ENCODE measurements at regions of chr15 and their contacts with region 1.

Region 1: GRCh38 chr15:88467073-88467934 is at the starts of genes MRPL46 and MRPS11:
- DNase-seq: peak; percentile 93
- H3K4me3 Mint-ChIP-seq: peak within 1 kb of the TSS; percentile 91
- H3K27ac Mint-ChIP-seq: peak within 1 kb of the TSS; percentile 98
- H3K4me1 Mint-ChIP-seq: peaks cover 32% of the 10 kb centered on the region
- H3K27me3 Mint-ChIP-seq: no peaks in the 10 kb centered on the region
- total RNA-seq, gene MRPL46: 29.1 to 29.2 TPM
- total RNA-seq, gene MRPS11: 50.3 to 57.1 TPM

Region 2: GRCh38 chr15:88218550-88219221 is 248.6 kb before region 1 on chr15:
- CTCF ChIA-PET with region 1: no interaction called
- intact Hi-C with region 1: no loop called
- DNase-seq: no peak
- H3K4me3 Mint-ChIP-seq: no peak overlapping the region
- H3K27ac Mint-ChIP-seq: no peak overlapping the region
- H3K4me1 Mint-ChIP-seq: no peaks in the 10 kb centered on the region
- H3K27me3 Mint-ChIP-seq: no peaks in the 10 kb centered on the region

Region 3: DNA sequence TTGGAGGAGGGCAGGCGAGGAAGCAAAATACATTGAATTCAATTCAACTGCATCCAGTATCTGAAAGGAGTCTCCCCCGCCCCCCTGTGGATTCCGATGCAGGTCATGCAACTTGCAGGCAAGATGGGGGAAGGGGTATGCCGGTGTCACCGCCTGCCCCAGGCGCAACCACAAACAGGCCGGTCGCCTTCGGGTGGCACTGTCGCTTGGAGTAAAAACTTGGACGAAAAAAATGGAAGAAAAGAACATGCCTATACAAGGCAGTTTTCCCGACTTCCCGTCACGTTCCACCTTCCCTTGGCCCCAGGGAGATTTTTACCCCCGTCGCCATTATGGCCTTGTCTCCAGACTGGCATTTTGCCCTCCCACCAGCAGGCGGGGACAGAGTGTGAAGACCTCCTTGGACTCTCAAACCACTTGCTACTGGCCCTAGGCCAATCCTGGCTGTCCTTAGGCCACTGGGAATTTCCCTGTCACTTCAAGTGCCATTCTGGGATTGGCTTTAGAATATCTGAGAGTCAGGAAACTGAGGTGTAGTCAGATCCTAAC is 209.1 kb before region 1 on chr15:
- CTCF ChIA-PET with region 1: no interaction called
- intact Hi-C with region 1: loop called (anchors 5 kb)
- DNase-seq: peak; percentile 57
- H3K4me3 Mint-ChIP-seq: peak overlapping the region; percentile 84
- H3K27ac Mint-ChIP-seq: peak overlapping the region; percentile 19
- H3K4me1 Mint-ChIP-seq: peaks cover 27% of the 10 kb centered on the region
- H3K27me3 Mint-ChIP-seq: peaks cover 61% of the 10 kb centered on the region

Region 4: GRCh38 chr15:88513195-88513594 is 45.9 kb after region 1 on chr15:
- CTCF ChIA-PET with region 1: no interaction called
- intact Hi-C with region 1: no loop called
- DNase-seq: no peak
- H3K4me3 Mint-ChIP-seq: no peak overlapping the region
- H3K27ac Mint-ChIP-seq: no peak overlapping the region
- H3K4me1 Mint-ChIP-seq: no peaks in the 10 kb centered on the region
- H3K27me3 Mint-ChIP-seq: no peaks in the 10 kb centered on the region

Region 5: DNA sequence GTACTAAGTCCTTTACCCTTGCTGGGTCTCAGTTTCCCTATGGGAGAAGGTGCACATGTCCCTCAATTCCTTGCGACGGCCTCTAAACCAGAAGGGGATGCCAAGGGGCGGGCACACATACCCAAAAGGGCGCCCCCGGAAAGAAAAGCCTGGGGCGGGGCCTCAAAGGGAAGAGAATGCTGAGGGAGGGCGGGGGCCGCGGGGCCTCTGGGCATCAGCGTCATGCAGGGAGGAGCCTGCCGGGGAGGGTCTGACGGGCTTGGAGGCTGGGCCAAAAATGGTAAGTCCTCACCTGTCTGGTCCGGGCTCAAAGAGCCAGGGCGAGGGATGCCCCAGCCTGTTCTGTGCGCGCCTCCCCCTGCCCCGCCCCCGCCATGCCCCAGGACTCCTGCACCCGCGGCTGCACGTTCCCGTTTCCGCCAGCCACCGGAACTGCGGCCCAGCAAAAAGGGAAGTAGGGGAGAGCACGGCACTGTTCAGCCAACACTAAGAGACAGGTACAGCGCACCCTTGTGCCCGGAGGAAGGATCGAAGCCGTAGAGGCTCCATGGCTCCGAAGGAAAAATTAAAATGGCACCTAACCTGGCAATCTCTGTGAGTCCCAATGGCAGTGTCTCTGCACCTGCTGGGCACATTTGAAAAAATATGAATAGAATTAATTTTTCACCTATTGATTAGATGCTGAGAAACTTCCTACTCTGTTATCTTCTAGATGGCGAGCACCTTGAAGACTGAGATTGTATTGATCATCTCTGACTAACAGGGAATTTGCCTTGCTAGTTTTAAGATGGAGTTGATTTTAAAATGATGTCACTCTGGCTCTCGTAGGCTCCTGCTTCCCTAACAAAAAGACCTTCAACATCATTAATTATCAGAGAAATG is 79.2 kb after region 1 on chr15 and contains the start of gene DET1:
- CTCF ChIA-PET with region 1: no interaction called
- intact Hi-C with region 1: loop called (anchors 1 kb)
- DNase-seq: peak; percentile 98
- H3K4me3 Mint-ChIP-seq: peak within 1 kb of the TSS; percentile 90
- H3K27ac Mint-ChIP-seq: peak within 1 kb of the TSS; percentile 90
- H3K4me1 Mint-ChIP-seq: peaks cover 15% of the 10 kb centered on the region
- H3K27me3 Mint-ChIP-seq: no peaks in the 10 kb centered on the region
- total RNA-seq, gene DET1: 2.0 to 2.9 TPM

Region 6: DNA sequence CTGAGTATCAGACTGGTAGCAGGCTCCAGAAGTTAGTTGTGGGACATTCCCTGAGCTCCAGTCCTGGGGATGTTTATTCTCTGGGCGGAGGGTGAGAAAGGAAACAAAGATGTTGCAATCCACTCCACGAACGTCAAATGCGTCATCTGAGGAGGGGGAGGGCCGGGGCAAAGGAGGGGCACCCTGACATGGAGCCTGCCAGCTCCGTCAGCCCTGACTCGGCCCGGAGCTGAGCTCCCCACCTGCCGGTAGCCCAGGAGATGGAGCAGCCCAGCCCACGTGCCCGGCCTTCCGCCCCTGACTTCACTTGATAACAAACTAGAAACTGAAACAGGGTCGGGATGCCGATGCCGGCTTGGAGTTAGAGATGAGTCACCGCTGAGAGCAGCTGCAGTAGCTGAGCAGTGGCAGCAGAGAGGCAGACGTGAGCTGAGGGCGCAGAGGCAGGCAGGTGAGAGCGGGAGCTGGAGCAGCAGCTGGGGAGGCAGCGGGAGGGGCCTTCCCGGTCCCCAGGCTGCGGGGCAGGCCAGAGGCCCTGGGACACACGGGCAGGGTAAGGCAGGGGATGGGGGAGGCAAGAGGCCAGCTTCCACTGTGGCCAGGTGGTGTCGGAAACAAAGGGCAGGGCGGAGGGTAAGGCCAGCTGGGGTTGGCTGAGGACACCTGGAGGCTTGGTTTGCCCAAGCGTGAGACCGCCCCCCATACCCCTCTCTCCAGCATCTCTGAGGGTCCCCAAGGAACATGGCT is 171.5 kb after region 1 on chr15 and contains the start of gene ISG20:
- CTCF ChIA-PET with region 1: no interaction called
- intact Hi-C with region 1: loop called (anchors 1 kb)
- DNase-seq: peak; percentile 99
- H3K4me3 Mint-ChIP-seq: peak within 1 kb of the TSS; percentile 81
- H3K27ac Mint-ChIP-seq: peak within 1 kb of the TSS; percentile 96
- H3K4me1 Mint-ChIP-seq: peaks cover 79% of the 10 kb centered on the region
- H3K27me3 Mint-ChIP-seq: no peaks in the 10 kb centered on the region
- total RNA-seq, gene ISG20: 51.2 to 56.5 TPM

Region 7: GRCh38 chr15:88664151-88664778 is 197.0 kb after region 1 on chr15:
- CTCF ChIA-PET with region 1: interaction called, 3 read pairs
- intact Hi-C with region 1: loop called (anchors 1 kb)
- DNase-seq: peak; percentile 78
- H3K4me3 Mint-ChIP-seq: no peak overlapping the region
- H3K27ac Mint-ChIP-seq: no peak overlapping the region
- H3K4me1 Mint-ChIP-seq: peaks cover 31% of the 10 kb centered on the region
- H3K27me3 Mint-ChIP-seq: peaks cover 2% of the 10 kb centered on the region

Region 8: GRCh38 chr15:88834211-88834812 is 367.0 kb after region 1 on chr15:
- CTCF ChIA-PET with region 1: no interaction called
- intact Hi-C with region 1: loop called (anchors 5 kb)
- DNase-seq: peak; percentile 24
- H3K4me3 Mint-ChIP-seq: no peak overlapping the region
- H3K27ac Mint-ChIP-seq: no peak overlapping the region
- H3K4me1 Mint-ChIP-seq: peaks cover 5% of the 10 kb centered on the region
- H3K27me3 Mint-ChIP-seq: no peaks in the 10 kb centered on the region

Region 9: GRCh38 chr15:88938802-88939485 is 471.6 kb after region 1 on chr15:
- CTCF ChIA-PET with region 1: no interaction called
- intact Hi-C with region 1: no loop called
- DNase-seq: no peak
- H3K4me3 Mint-ChIP-seq: no peak overlapping the region
- H3K27ac Mint-ChIP-seq: no peak overlapping the region
- H3K4me1 Mint-ChIP-seq: no peaks in the 10 kb centered on the region
- H3K27me3 Mint-ChIP-seq: no peaks in the 10 kb centered on the region